CD4-positive, alpha-beta T cell (primary cell): ENCODE measurements at regions of chr10 and their contacts with region 1.

Region 1: GRCh38 chr10:67697724-67698131 is 1.7 kb upstream of the CTNNA3 start:
- DNase-seq: peak in 9 of 14 experiments; percentile 2 to 75 (median 10)
- ATAC-seq: peak; percentile 90
- H3K4me3 ChIP-seq: no peak overlapping the region
- H3K4me3 Mint-ChIP-seq: no peak overlapping the region
- H3K27ac ChIP-seq: no peak overlapping the region
- H3K27ac Mint-ChIP-seq: no peak overlapping the region
- H3K4me1 ChIP-seq: peaks cover 6% of the 10 kb centered on the region
- H3K4me1 Mint-ChIP-seq: peaks cover 15% of the 10 kb centered on the region
- H3K27me3 ChIP-seq: no peaks in the 10 kb centered on the region
- H3K27me3 Mint-ChIP-seq: peaks cover 39% of the 10 kb centered on the region
- CTCF ChIP-seq: peak; percentile 73

Region 2: DNA sequence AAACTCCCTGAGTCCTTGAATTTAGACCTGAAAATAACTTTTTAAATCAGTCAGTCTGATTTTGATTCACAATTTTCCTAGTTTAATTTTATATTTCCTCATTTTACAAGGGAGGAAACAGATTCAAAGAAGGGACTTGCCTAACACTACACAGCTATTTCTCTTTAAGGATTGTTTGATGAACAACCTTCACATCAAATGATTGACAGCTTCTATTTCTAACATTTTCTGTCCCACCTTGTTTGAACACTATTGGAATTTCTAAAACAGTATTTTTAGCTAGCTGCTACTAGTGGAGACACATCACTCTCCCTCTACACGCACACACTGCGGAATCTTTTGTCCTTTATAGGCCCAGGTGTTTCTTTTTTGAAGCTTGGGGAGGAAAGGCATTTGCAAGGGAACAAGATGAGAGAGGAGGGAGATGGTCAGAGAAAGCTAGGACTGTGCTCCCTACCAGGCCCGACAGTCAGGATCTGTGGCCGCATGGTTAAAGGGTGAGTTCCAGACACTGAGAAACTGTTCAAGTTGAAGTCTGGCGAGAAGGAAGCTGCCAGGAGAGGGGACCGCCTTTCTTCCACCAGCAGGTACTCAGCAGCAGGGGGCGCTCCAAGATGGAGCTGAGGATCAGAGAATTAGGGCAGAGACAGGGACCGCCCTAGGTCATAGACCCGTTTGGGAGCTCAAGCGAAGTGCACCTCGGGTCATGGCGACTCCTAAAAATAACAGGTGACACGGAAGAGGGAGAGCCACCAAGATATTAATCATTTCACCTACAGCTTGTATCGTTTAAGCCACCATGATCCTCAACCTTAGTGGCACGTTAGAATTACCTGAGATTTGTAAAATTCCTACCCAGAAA is 90.5 kb after region 1 on chr10:
- CTCF ChIA-PET with region 1: interaction called, 17 read pairs
- POLR2A ChIA-PET with region 1: no interaction called
- intact Hi-C with region 1: no loop called
- DNase-seq: peak; percentile 52 to 79 (median 62)
- ATAC-seq: peak; percentile 73
- H3K4me3 ChIP-seq: no peak overlapping the region
- H3K4me3 Mint-ChIP-seq: no peak overlapping the region
- H3K27ac ChIP-seq: no peak overlapping the region
- H3K27ac Mint-ChIP-seq: no peak overlapping the region
- H3K4me1 ChIP-seq: peaks cover 30% of the 10 kb centered on the region
- H3K4me1 Mint-ChIP-seq: peaks cover 30% of the 10 kb centered on the region
- H3K27me3 ChIP-seq: no peaks in the 10 kb centered on the region
- H3K27me3 Mint-ChIP-seq: no peaks in the 10 kb centered on the region
- CTCF ChIP-seq: peak; percentile 57

Region 3: DNA sequence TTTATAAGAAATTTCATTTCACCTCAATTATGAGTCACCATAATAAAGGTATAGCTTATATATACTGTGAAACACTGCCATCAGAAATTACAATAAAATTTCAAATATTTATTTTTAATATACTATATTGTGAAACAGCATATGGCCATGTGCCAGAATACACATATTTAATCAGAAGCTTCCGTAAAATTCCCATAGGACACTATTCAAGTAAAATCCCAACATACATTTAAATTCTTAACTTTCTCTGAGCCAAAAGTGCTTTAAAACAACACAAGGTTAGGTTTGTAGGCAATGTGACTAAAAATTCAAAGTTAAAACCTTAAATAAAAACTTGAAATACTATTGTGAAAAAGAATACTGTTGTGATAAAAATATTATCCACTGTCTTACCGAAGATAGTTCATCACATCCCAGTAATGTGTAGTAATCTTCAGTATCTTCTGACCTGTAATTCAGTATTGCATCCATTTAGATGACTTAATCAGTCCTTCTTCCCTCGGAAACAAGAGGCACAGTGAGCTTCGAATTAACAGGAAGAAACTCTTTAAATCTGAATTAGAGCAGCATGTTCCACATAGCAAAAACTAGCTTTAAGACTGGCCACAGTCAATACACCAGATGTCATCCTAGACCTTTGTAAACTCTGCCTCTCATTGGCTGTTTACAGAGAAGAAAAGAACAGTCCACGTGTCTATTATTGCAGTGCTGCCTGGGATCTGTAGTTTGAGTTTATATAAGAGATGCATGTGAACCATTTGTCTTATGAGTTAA is 140.0 kb after region 1 on chr10 and contains the start of gene DNAJC12:
- CTCF ChIA-PET with region 1: no interaction called
- POLR2A ChIA-PET with region 1: no interaction called
- intact Hi-C with region 1: no loop called
- DNase-seq: peak in 3 of 14 experiments; percentile 19 to 42 (median 41)
- ATAC-seq: peak; percentile 95
- H3K4me3 ChIP-seq: no peak within 1 kb of the TSS
- H3K4me3 Mint-ChIP-seq: no peak within 1 kb of the TSS
- H3K27ac ChIP-seq: no peak within 1 kb of the TSS
- H3K27ac Mint-ChIP-seq: no peak within 1 kb of the TSS
- H3K4me1 ChIP-seq: no peaks in the 10 kb centered on the region
- H3K4me1 Mint-ChIP-seq: peaks cover 6% of the 10 kb centered on the region
- H3K27me3 ChIP-seq: no peaks in the 10 kb centered on the region
- H3K27me3 Mint-ChIP-seq: no peaks in the 10 kb centered on the region
- CTCF ChIP-seq: no peak
- total RNA-seq, gene DNAJC12: not detected